Stomach (tissue), 19 donors: ENCODE measurements at regions of chr15 and their contacts with region 1.

Region 1: DNA sequence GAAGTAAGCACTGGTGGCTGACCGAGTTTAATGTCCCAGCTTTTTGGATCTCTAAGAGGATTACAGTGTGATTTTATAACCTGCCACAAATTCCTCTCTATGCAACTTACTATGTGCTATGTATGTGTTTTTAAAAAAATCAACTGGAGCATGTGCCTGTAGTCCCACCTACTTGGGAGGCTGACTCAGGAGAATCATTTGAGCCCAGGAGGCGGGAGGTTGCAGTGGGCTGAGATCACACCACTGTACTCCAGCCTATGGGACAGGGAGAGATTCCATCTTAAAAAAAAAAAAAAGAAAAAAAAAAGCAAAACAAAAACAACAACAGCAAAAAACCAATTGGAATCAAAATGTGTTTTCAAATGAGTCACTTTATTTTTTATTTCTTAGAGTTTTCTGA is 29.6 kb downstream of the DUT start:
- DNase-seq: no peak
- H3K4me3 ChIP-seq: no peak overlapping the region
- H3K27ac ChIP-seq: no peak overlapping the region
- H3K4me1 ChIP-seq: peaks cover 0 to 9% (median 4%) of the 10 kb centered on the region in 4 donors
- H3K27me3 ChIP-seq: no peaks in the 10 kb centered on the region
- CTCF ChIP-seq: no peak
- EP300 ChIP-seq: no peak
- POLR2A ChIP-seq: no peak

Region 2: DNA sequence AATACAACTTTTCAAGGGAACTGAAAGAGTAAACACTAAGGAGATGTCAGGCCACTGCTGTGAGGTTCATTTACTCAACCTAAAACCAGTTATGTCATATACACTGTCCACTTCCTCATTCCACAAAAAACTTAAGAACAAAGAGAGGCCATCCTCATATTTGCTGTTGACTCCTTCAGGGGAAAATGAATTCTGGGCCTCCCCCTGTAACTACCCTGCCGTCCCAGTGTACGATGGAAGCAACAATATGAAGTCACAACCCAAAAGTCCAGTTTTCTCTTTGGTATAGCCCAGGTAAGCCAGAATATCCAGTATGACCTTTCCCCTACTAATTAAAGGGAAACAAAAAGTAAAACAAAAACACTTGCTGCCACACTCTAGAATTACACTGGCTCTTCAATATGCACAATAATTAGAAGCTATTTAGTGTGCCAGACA is 433.9 kb after region 1 on chr15:
- intact Hi-C with region 1: loop called (anchors 10 kb)
- DNase-seq: peak in 1 of 2 donors; percentile 18
- H3K4me3 ChIP-seq: no peak overlapping the region
- H3K27ac ChIP-seq: peak overlapping the region in 3 of 5 donors; percentile 43 to 55 (median 46)
- H3K4me1 ChIP-seq: peaks cover 0 to 12% (median 4%) of the 10 kb centered on the region in 4 donors
- H3K27me3 ChIP-seq: no peaks in the 10 kb centered on the region
- CTCF ChIP-seq: no peak
- EP300 ChIP-seq: no peak
- POLR2A ChIP-seq: no peak

Region 3: DNA sequence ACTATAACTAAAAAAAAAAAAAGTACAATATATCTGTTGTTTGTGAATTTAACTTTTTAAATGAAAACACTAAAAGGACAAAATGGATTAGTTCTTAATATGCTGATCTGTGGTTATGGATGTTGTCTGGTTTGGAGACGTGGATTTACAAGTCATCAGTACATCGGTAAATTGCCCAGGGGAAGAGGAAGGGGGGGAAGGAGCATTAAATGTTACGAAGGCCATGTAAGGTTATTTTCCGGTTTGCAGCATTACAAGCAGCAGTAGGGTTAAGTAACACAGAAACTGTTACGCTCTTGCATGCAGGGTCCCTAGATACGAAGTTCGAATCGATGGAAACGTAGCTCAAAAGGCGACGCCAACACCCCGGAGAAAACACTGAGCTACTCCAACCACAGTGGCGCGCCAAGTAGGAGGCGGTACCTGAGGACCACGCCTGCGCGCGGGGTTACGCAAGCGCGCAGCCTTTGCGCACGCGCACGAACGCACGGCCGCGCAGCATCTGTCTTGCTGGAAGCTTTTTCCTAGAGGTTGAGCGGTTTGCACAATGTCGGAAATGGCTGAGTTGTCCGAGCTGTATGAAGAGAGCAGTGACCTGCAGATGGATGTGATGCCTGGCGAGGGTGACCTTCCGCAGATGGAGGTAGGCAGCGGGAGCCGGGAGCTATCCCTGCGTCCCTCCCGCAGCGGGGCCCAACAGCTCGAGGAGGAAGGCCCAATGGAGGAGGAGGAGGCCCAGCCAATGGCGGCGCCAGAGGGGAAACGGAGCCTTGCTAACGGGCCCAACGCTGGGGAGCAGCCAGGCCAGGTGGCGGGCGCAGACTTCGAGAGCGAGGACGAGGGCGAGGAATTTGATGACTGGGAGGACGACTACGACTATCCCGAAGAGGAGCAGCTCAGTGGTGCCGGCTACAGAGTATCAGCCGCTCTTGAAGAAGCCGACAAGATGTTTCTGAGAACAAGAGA is 517.1 kb after region 1 on chr15 and contains the start of gene EID1:
- intact Hi-C with region 1: no loop called
- DNase-seq: peak; percentile 94 to 99
- H3K4me3 ChIP-seq: peak within 1 kb of the TSS; percentile 68 to 77 (median 73)
- H3K27ac ChIP-seq: peak within 1 kb of the TSS; percentile 82 to 92 (median 91)
- H3K4me1 ChIP-seq: peaks cover 4 to 30% (median 14%) of the 10 kb centered on the region in 4 donors
- H3K27me3 ChIP-seq: peaks cover 0 to 6% (median 4%) of the 10 kb centered on the region in 3 donors
- CTCF ChIP-seq: peak in 1 of 7 experiments; percentile 29
- EP300 ChIP-seq: no peak
- POLR2A ChIP-seq: no peak
- total RNA-seq, gene EID1: 63.6 to 455 (median 101) TPM